ENCODE measurements at regions of chr17 and their contacts with region 1.

Region 1: DNA sequence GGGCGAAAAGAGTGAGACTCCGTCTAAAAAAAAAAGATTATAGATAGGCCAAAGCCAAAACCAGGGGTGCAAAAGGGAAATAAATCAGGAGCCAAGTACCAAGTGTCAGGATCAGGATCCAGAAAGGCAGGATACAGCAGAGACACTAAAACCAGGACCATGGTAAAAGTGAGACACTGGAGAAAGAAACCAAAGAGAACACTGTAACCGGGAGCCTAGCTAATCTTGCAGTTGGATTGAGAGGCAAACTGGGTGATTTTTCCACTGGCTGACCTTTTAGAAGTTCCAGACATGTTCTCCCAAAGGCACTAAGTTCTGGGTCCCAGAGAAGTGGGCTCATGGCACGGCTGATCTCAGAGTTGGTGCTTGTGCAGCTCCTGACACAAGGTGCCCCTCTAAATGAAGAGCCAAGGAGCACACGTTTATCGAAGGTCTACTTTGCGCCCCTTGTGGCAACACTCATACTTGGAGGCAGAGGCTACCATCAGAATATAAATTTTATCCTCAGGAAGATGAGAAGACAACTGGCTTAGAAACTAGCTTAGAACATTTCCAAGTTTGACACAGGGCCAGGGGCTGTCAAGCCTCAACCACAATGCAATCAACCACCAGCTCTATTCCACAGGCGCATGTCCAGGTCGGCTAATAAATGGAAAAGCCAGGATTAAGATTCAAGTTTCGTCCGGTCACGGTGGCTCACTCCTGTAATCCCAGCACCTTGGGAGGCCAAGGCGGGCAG is 27.5 kb upstream of the HELZ start:
- DNase-seq: peak; percentile 50
- ATAC-seq: peak; percentile 95
- H3K4me3 Mint-ChIP-seq: no peak overlapping the region
- H3K27ac Mint-ChIP-seq: peak overlapping the region; percentile 60; the same call in 1 of the 2 replicates
- H3K4me1 Mint-ChIP-seq: no peaks in the 10 kb centered on the region
- H3K27me3 Mint-ChIP-seq: no peaks in the 10 kb centered on the region
- CTCF ChIP-seq: peak; percentile 28; the same call in 1 of the 2 replicates

Region 2: GRCh38 chr17:67239597-67239996 is 32.9 kb before region 1 on chr17:
- CTCF ChIA-PET with region 1: interaction called, 10 read pairs
- POLR2A ChIA-PET with region 1: no interaction called
- DNase-seq: no peak
- ATAC-seq: no peak
- H3K4me3 Mint-ChIP-seq: no peak overlapping the region
- H3K27ac Mint-ChIP-seq: no peak overlapping the region
- H3K4me1 Mint-ChIP-seq: peaks cover 13% of the 10 kb centered on the region
- H3K27me3 Mint-ChIP-seq: no peaks in the 10 kb centered on the region
- CTCF ChIP-seq: no peak